ENCODE measurements at regions of chr18 and their contacts with region 1.

Region 1: DNA sequence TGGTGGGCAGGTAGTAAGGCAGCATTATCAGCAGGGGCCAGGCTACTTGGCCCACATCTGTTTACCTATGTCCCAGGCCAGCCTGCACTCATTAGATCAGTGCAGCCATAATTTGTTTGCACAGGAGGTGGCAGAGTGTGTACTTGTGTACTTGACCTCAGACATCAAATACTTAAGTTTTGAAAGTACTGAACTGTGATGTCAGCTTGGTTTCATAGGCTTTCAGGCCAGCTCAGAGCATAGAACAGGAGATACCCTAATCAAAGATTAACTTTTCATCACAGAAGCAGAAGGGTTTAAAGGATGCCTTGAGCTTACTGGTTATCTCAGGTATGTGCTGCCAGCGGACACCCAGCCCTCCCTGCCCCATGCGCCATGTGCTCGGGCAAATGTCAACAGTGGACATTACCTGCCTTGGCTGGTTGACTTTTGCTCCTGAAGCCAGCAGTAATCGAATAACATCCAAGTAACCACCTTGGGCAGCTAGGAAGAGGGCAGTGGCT is 33.2 kb downstream of the ANKRD29 start:
- DNase-seq: no peak
- H3K4me3 ChIP-seq: no peak overlapping the region
- H3K4me1 ChIP-seq: no peaks in the 10 kb centered on the region
- H3K27me3 ChIP-seq: peaks cover 2% of the 10 kb centered on the region; the same call in 1 of the 2 replicates

Region 2: GRCh38 chr18:23805898-23806297 is 176.4 kb after region 1 on chr18:
- in situ Hi-C with region 1: loop called (anchors 10 kb)
- DNase-seq: no peak
- H3K4me3 ChIP-seq: no peak overlapping the region
- H3K4me1 ChIP-seq: no peaks in the 10 kb centered on the region
- H3K27me3 ChIP-seq: peaks cover 8% of the 10 kb centered on the region; the same call in 1 of the 2 replicates

Region 3: DNA sequence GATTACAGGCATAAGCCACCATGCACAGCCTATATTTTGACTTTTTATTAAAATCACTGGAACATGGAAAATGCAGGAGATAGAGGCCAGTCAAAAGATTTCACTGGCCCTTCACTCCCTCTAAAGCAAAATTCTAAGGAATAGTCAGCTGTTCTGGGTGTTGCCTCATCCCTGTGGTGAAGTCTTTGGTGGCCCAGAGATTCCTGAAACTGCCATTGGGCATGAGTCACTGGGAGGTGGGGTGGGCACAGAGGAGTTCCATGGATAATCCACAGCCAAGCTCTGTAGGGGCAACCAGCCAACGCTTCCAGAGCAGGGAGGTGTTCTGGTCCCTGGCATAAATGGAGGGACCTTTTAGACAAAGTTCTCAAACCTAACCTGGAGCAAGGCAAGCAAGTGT is 295.3 kb after region 1 on chr18:
- in situ Hi-C with region 1: loop called (anchors 10 kb)
- DNase-seq: no peak
- H3K4me3 ChIP-seq: no peak overlapping the region
- H3K4me1 ChIP-seq: peaks cover 11% of the 10 kb centered on the region
- H3K27me3 ChIP-seq: no peaks in the 10 kb centered on the region

Region 4: DNA sequence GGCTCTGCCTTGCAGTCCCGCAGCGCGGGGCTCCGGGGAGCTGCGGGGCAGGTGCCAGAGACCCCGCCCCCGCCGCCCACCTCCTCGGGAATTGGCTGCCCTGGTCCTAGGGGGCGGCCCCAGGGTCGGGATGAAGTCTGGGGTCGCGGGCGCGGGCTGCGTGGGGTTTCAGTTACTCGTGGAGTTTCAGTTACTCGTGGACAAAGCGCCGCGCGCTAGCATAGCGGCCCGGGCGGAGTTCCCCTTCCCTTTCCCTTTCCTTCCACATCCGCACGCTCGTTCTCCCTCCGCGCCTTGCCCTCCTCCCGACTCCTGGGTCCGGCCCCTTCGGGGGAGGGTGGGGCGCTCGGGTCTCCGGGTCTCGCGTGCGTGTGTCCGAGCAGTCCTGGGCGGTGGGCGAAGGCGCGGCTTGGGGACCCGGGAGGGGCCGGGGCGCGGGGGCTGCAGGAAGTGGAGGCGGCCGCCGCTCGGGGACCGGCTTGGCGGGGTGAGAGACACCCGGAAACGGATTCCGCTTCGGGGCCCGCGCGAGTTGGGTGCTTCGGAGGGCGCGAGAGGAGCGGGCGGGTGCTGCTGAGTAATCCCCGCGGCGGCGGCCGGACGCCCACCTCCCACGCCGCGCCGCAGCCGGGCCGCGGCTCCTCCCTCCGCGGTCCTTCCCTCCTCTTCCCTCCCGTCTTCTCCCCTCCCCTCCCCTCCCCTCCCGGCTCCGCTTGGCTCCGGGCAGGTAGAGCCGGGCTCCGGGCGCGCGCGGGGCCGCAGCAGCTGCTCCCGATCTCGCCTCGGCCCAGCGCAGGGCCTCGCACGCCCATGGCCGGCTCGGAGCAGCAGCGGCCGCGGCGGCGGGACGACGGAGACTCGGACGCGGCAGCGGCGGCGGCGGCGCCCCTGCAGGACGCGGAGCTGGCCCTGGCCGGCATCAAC is 384.8 kb after region 1 on chr18 and contains the start of gene TTC39C:
- in situ Hi-C with region 1: no loop called
- DNase-seq: peak; percentile 29 to 77
- H3K4me3 ChIP-seq: peak within 1 kb of the TSS; percentile 69
- H3K4me1 ChIP-seq: peaks cover 10% of the 10 kb centered on the region
- H3K27me3 ChIP-seq: 0 out of 2 replicates have a peak, but pooled peaks cover 2% of the 10 kb centered on the region

Region 5: GRCh38 chr18:24039671-24040070 is 410.2 kb after region 1 on chr18:
- in situ Hi-C with region 1: no loop called
- DNase-seq: no peak
- H3K4me3 ChIP-seq: no peak overlapping the region
- H3K4me1 ChIP-seq: no peaks in the 10 kb centered on the region
- H3K27me3 ChIP-seq: no peaks in the 10 kb centered on the region

Region 6: GRCh38 chr18:24333071-24333470 is 703.6 kb after region 1 on chr18:
- in situ Hi-C with region 1: no loop called
- DNase-seq: no peak
- H3K4me3 ChIP-seq: no peak overlapping the region
- H3K4me1 ChIP-seq: no peaks in the 10 kb centered on the region
- H3K27me3 ChIP-seq: no peaks in the 10 kb centered on the region

Measured in HAP-1 (cell line).